ENCODE measurements at regions of chr15 and their contacts with region 1.

Region 1: GRCh38 chr15:38252481-38253412 is at the start of gene SPRED1:
- DNase-seq: peak; percentile 42
- H3K4me3 ChIP-seq: peak within 1 kb of the TSS; percentile 91
- H3K27ac ChIP-seq: peak within 1 kb of the TSS; percentile 76
- H3K4me1 ChIP-seq: peaks cover 28% of the 10 kb centered on the region
- CTCF ChIP-seq: no peak
- total RNA-seq, gene SPRED1: 7.5 and 9.6 TPM in 2 replicates

Region 2: GRCh38 chr15:38002883-38003477 is 249.8 kb before region 1 on chr15:
- CTCF ChIA-PET with region 1: no interaction called
- POLR2A ChIA-PET with region 1: interaction called, 3 read pairs
- intact Hi-C with region 1: loop called (anchors 2 kb)
- DNase-seq: peak; percentile 77
- H3K4me3 ChIP-seq: no peak overlapping the region
- H3K27ac ChIP-seq: no peak overlapping the region
- H3K4me1 ChIP-seq: no peaks in the 10 kb centered on the region
- CTCF ChIP-seq: peak; percentile 87

Region 3: DNA sequence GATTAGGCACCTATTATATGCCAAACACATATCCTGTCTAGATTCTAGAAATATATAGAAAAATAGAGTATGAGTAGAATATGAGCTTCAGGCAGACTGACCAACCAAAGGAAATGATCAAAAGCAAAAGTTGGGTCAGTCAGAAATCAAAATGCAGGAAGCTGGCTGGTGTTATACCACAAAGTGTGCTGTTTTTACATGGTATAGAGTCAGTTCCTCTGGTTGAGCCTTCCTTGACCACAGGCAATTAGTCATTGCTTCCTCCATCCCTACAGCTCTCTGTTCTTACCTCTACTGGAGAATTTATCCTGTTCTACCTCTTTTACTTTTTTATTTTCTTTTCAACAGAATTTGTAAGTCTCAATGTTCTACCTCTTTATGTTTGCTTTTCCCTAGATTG is 168.5 kb before region 1 on chr15:
- CTCF ChIA-PET with region 1: no interaction called
- POLR2A ChIA-PET with region 1: interaction called, 18 read pairs
- intact Hi-C with region 1: no loop called
- DNase-seq: peak; percentile 51
- H3K4me3 ChIP-seq: peak overlapping the region; percentile 32
- H3K27ac ChIP-seq: peak overlapping the region; percentile 8
- H3K4me1 ChIP-seq: peaks cover 50% of the 10 kb centered on the region
- CTCF ChIP-seq: no peak

Region 4: DNA sequence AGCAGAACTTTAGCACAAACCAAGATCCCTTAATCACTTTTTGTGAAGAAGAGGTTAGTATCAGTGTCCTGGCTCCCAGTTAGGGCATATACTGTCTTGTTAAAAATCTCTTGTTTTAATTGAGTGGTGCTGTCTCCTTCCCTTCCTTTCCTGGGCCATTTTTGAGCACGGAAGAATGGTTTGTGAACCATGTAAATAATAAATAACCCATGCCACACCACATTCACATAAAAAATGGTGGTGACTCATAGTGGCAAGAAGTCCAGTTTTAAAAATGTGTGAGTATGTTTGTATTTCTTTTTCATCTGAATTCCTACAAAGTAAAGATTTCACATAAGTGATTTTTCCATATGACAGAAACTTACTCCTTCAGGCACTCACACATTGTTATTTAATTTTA is 59.3 kb before region 1 on chr15:
- CTCF ChIA-PET with region 1: no interaction called
- POLR2A ChIA-PET with region 1: interaction called, 7 read pairs
- intact Hi-C with region 1: loop called (anchors 1 kb)
- DNase-seq: no peak
- H3K4me3 ChIP-seq: no peak overlapping the region
- H3K27ac ChIP-seq: peak overlapping the region; percentile 75
- H3K4me1 ChIP-seq: peaks cover 59% of the 10 kb centered on the region
- CTCF ChIP-seq: no peak

Region 5: DNA sequence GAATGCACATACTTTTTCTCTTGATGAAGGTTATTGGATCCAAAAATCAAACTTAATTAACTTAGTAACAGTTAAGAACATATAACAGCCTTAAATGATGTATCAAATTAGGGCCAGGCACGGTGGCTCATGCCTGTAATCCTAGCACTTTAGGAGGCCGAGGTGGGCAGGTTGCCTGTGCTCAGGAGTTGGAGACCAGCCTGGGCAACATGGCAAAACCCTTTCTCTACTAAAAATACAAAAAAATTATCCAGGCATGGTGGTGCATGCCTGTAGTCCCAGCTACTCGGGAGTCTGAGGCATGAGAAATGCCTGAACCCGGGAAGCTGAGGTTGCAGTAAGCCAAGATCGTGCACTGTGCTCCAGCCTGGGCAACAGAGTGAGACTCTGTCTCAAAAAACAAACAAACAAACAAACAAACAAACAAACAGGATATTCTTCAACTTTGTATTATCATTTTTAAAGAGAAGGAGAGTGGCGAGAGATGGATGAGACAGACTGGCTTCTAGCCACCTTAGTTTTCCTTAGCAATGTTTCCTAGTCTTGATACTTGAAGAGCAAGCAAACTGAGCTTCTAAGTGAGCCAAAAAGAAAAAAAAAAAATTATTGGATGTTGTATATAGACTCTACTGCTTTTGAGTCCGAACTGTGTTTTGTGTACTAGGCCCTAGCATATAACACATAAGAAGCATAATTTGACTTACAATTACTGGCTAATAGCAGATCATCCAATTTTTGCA is 13.7 kb after region 1 on chr15:
- CTCF ChIA-PET with region 1: no interaction called
- POLR2A ChIA-PET with region 1: interaction called, 10 read pairs
- intact Hi-C with region 1: loop called (anchors 2 kb)
- DNase-seq: no peak
- H3K4me3 ChIP-seq: no peak overlapping the region
- H3K27ac ChIP-seq: no peak overlapping the region
- H3K4me1 ChIP-seq: no peaks in the 10 kb centered on the region
- CTCF ChIP-seq: no peak